Ovary (tissue), 10 donors: ENCODE measurements at regions of chr15 and their contacts with region 1.

Region 1: GRCh38 chr15:52139599-52140491 is 27.3 kb upstream of the BCL2L10 start:
- DNase-seq: peak; percentile 50 to 79 (median 72)
- H3K4me3 ChIP-seq: no peak overlapping the region
- H3K27ac ChIP-seq: no peak overlapping the region
- H3K4me1 ChIP-seq: no peaks in the 10 kb centered on the region
- H3K27me3 ChIP-seq: no peaks in the 10 kb centered on the region
- CTCF ChIP-seq: peak; percentile 46 to 69 (median 55)
- EP300 ChIP-seq: no peak
- POLR2A ChIP-seq: no peak

Region 2: GRCh38 chr15:51888593-51889195 is 251.2 kb before region 1 on chr15:
- intact Hi-C with region 1: loop called in 1 of 4 experiments (anchors 10 kb)
- DNase-seq: no peak
- H3K4me3 ChIP-seq: no peak overlapping the region
- H3K27ac ChIP-seq: no peak overlapping the region
- H3K4me1 ChIP-seq: peaks cover 3% of the 10 kb centered on the region
- H3K27me3 ChIP-seq: no peaks in the 10 kb centered on the region
- CTCF ChIP-seq: peak; percentile 22 to 55 (median 50)
- EP300 ChIP-seq: no peak
- POLR2A ChIP-seq: no peak

Region 3: GRCh38 chr15:51992976-51993375 is 146.9 kb before region 1 on chr15:
- intact Hi-C with region 1: loop called in 1 of 4 experiments (anchors 10 kb)
- DNase-seq: no peak
- H3K4me3 ChIP-seq: no peak overlapping the region
- H3K27ac ChIP-seq: no peak overlapping the region
- H3K4me1 ChIP-seq: no peaks in the 10 kb centered on the region
- H3K27me3 ChIP-seq: no peaks in the 10 kb centered on the region
- CTCF ChIP-seq: no peak
- EP300 ChIP-seq: no peak
- POLR2A ChIP-seq: no peak

Region 4: GRCh38 chr15:52031566-52031965 is 108.3 kb before region 1 on chr15:
- intact Hi-C with region 1: no loop called
- DNase-seq: no peak
- H3K4me3 ChIP-seq: no peak overlapping the region
- H3K27ac ChIP-seq: no peak overlapping the region
- H3K4me1 ChIP-seq: no peaks in the 10 kb centered on the region
- H3K27me3 ChIP-seq: no peaks in the 10 kb centered on the region
- CTCF ChIP-seq: no peak
- EP300 ChIP-seq: no peak
- POLR2A ChIP-seq: no peak

Region 5: GRCh38 chr15:52057996-52058395 is 81.8 kb before region 1 on chr15:
- intact Hi-C with region 1: no loop called
- DNase-seq: no peak
- H3K4me3 ChIP-seq: no peak overlapping the region
- H3K27ac ChIP-seq: no peak overlapping the region
- H3K4me1 ChIP-seq: no peaks in the 10 kb centered on the region
- H3K27me3 ChIP-seq: no peaks in the 10 kb centered on the region
- CTCF ChIP-seq: no peak
- EP300 ChIP-seq: no peak
- POLR2A ChIP-seq: no peak

Region 6: GRCh38 chr15:52232327-52232726 is 92.5 kb after region 1 on chr15:
- intact Hi-C with region 1: no loop called
- DNase-seq: no peak
- H3K4me3 ChIP-seq: no peak overlapping the region
- H3K27ac ChIP-seq: no peak overlapping the region
- H3K4me1 ChIP-seq: no peaks in the 10 kb centered on the region
- H3K27me3 ChIP-seq: no peaks in the 10 kb centered on the region
- CTCF ChIP-seq: no peak
- EP300 ChIP-seq: no peak
- POLR2A ChIP-seq: no peak